ENCODE measurements at regions of chr3 and their contacts with region 1.

Region 1: DNA sequence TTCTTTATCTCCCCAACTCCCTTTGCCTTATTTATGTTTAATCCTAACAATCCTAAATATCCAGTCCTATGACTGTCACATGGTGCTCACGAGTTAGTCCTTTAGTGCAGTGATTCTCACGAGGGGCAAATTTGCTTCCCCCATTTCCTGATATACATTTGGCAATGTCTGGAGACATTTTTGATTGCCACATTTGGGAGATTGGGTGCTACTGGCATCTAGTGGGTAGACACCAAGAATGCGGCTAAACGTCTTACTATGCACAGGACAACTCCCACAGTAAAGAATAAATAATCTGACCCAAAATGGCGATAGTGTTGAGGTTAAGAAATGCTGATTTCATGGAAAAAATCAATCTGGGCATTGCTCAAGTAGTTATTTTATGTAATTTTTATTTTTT is 466.5 kb downstream of the ROBO2 start:
- DNase-seq: no peak
- H3K4me3 Mint-ChIP-seq: no peak overlapping the region
- H3K27ac Mint-ChIP-seq: no peak overlapping the region
- H3K4me1 Mint-ChIP-seq: no peaks in the 10 kb centered on the region
- H3K27me3 Mint-ChIP-seq: no peaks in the 10 kb centered on the region
- CTCF ChIP-seq: no peak

Region 2: DNA sequence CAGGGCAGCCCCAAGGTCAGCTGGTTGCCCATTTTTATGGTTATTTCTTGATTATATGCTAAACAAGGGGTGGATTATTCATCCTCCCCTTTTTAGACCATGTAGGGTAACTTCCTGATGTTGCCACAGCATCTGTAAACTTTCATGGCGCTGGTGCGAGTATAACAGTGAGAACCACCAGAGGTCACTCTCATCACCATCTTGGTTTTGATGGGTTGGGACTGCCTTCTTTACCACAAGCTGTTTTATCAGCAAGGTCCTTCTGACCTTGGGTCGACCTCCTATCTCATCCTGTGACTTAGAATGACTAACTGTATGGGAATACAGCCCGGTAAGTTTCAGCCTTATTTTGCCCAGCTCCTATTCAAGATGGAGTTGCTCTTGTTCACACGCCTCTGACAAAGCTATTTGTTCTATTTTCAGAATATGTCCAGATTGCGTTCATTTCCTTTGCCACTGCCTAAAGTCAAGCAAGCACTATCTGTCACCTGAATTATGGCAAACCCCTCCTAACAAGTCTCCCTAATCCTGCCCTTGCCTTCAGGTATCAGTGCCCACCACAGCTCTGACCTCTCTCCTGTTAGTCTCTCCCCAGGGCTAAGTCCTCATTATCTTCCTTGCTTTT is 158.0 kb before region 1 on chr3:
- CTCF ChIA-PET with region 1: no interaction called
- intact Hi-C with region 1: loop called (anchors 5 kb)
- DNase-seq: peak; percentile 24
- H3K4me3 Mint-ChIP-seq: no peak overlapping the region
- H3K27ac Mint-ChIP-seq: no peak overlapping the region
- H3K4me1 Mint-ChIP-seq: peaks cover 12% of the 10 kb centered on the region
- H3K27me3 Mint-ChIP-seq: no peaks in the 10 kb centered on the region
- CTCF ChIP-seq: peak; percentile 18